ENCODE measurements at regions of chr7 and their contacts with region 1.

Region 1: GRCh38 chr7:8125680-8126444 is 136.1 kb downstream of the ICA1 start:
- DNase-seq: peak; percentile 72
- H3K4me3 Mint-ChIP-seq: peak overlapping the region; percentile 64
- H3K27ac Mint-ChIP-seq: peak overlapping the region; percentile 98
- H3K4me1 Mint-ChIP-seq: peaks cover 76% of the 10 kb centered on the region
- H3K27me3 Mint-ChIP-seq: no peaks in the 10 kb centered on the region

Region 2: GRCh38 chr7:7182156-7183060 is 943.5 kb before region 1 on chr7 and contains the start of gene C1GALT1:
- intact Hi-C with region 1: loop called (anchors 5 kb)
- DNase-seq: peak; percentile 95
- H3K4me3 Mint-ChIP-seq: peak within 1 kb of the TSS; percentile 95
- H3K27ac Mint-ChIP-seq: peak within 1 kb of the TSS; percentile 99
- H3K4me1 Mint-ChIP-seq: peaks cover 22% of the 10 kb centered on the region
- H3K27me3 Mint-ChIP-seq: no peaks in the 10 kb centered on the region
- total RNA-seq, gene C1GALT1: 37.1 and 37.6 TPM in 2 replicates

Region 3: GRCh38 chr7:7761340-7761980 is 364.4 kb before region 1 on chr7:
- intact Hi-C with region 1: no loop called
- DNase-seq: no peak
- H3K4me3 Mint-ChIP-seq: peak overlapping the region; percentile 86
- H3K27ac Mint-ChIP-seq: peak overlapping the region; percentile 83
- H3K4me1 Mint-ChIP-seq: peaks cover 38% of the 10 kb centered on the region
- H3K27me3 Mint-ChIP-seq: no peaks in the 10 kb centered on the region

Region 4: GRCh38 chr7:7851381-7851780 is 274.5 kb before region 1 on chr7:
- intact Hi-C with region 1: loop called (anchors 1 kb)
- DNase-seq: no peak
- H3K4me3 Mint-ChIP-seq: no peak overlapping the region
- H3K27ac Mint-ChIP-seq: no peak overlapping the region
- H3K4me1 Mint-ChIP-seq: peaks cover 35% of the 10 kb centered on the region
- H3K27me3 Mint-ChIP-seq: no peaks in the 10 kb centered on the region

Region 5: GRCh38 chr7:8015100-8015748 is 110.6 kb before region 1 on chr7:
- intact Hi-C with region 1: loop called (anchors 2 kb)
- DNase-seq: no peak
- H3K4me3 Mint-ChIP-seq: no peak overlapping the region
- H3K27ac Mint-ChIP-seq: peak overlapping the region; percentile 28
- H3K4me1 Mint-ChIP-seq: peaks cover 17% of the 10 kb centered on the region
- H3K27me3 Mint-ChIP-seq: no peaks in the 10 kb centered on the region

Region 6: DNA sequence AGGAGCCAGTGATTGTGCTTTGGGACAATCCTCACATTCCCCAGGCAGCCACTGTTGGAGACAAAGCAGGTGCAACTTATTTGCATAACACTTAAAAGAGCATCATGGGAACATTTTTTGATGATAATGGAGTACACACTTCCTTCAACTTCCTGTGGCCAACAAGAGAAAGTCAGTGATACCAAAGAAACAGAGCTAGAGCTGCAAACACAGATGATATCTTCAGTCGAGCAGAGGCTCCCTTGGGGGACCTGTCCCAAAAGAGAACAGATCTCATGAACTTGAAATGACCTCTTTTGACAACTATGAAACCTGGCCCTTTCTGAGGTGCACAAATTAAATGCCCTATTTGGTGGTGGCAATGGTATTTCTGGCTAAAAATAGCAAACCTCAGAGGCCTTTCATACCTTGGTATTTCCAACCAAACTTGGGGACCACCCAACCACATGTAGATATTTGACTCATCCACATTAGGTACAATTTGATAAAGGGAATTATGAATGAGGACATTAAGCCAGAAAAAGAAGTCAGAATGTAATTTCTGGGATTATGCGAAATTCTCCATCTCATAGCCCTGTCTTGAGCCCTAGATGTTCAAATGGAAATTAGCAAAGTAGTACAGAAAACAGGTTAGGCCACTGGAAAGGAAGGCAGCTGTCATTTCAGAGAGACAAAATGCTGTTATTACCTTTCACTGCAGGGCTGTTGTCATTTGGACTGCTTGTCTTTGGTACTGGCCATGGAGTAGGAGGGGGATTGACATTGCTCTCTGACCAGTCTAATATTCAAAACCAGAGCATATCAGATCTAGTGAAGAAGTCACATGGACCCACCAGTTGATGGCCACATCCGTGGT is 10.1 kb before region 1 on chr7:
- intact Hi-C with region 1: loop called (anchors 1 kb)
- DNase-seq: no peak
- H3K4me3 Mint-ChIP-seq: no peak overlapping the region
- H3K27ac Mint-ChIP-seq: peak overlapping the region; percentile 20
- H3K4me1 Mint-ChIP-seq: peaks cover 54% of the 10 kb centered on the region
- H3K27me3 Mint-ChIP-seq: no peaks in the 10 kb centered on the region

Region 7: GRCh38 chr7:8201846-8202441 is 76.1 kb after region 1 on chr7:
- intact Hi-C with region 1: loop called (anchors 1 kb)
- DNase-seq: no peak
- H3K4me3 Mint-ChIP-seq: no peak overlapping the region
- H3K27ac Mint-ChIP-seq: peak overlapping the region; percentile 55
- H3K4me1 Mint-ChIP-seq: peaks cover 70% of the 10 kb centered on the region
- H3K27me3 Mint-ChIP-seq: peaks cover 6% of the 10 kb centered on the region

Measured in activated T-helper 2 cell treated with anti-CD3 and anti-CD28 coated beads, Interferon-gamma antibody, Interleukin-2, Interleukin-4, amounts not matched to agents 10 μg/mL and 5 μg/mL and 100 μg/mL, durations not matched to agents 14 hours and 24 hours and 36 hours (primary cell).